Right ventricle myocardium inferior (tissue), 1 donor: ENCODE measurements at regions of chr5 and their contacts with region 1.

Region 1: GRCh38 chr5:154072414-154073171 is 33.8 kb downstream of the MFAP3 start:
- DNase-seq: peak; percentile 87
- ATAC-seq: peak; percentile 93

Region 2: GRCh38 chr5:154179846-154180710 is 107.5 kb after region 1 on chr5:
- intact Hi-C with region 1: loop called (anchors 1 kb)
- DNase-seq: no peak
- ATAC-seq: peak; percentile 82